ENCODE measurements at regions of chr6 and their contacts with region 1.

Region 1: DNA sequence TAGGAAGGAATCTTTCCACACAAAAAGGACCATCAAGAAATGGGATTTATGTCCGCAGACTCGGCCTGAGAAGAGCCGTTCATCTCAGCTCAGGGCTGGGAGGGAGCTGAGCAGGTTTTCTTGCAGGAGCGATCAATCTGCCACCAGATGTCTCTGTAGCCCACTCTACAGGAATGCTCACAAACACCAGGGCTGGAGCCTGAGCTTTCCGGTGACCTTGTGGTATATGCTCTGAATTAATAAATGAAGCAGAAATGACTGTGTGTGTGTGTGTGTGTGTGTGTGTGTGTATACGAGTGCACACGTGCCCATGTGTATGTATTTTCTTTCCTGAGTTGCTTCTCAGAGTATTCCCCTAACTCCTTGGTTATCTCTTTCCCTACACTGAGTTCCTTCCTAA is 12.0 kb downstream of the CD83 start:
- DNase-seq: peak in 9 of 10 donors; percentile 44 to 80 (median 63)
- H3K4me3 ChIP-seq: no peak overlapping the region
- H3K27ac ChIP-seq: peak overlapping the region in 18 of 59 donors; percentile 5 to 67 (median 36)
- H3K27me3 ChIP-seq: no peaks in the 10 kb centered on the region
- CTCF ChIP-seq: peak in 54 of 56 donors; percentile 31 to 80 (median 56)

Region 2: GRCh38 chr6:14476793-14477531 is 347.4 kb after region 1 on chr6:
- intact Hi-C with region 1: no loop called
- DNase-seq: peak in 5 of 10 donors; percentile 20 to 62 (median 41)
- H3K4me3 ChIP-seq: peak overlapping the region in 26 of 59 donors; percentile 1 to 46 (median 22)
- H3K27ac ChIP-seq: peak overlapping the region in 18 of 59 donors; percentile 1 to 70 (median 40)
- H3K27me3 ChIP-seq: no peaks in the 10 kb centered on the region
- CTCF ChIP-seq: no peak

Region 3: GRCh38 chr6:15512126-15512525 is 1382.6 kb after region 1 on chr6:
- intact Hi-C with region 1: loop called in 1 of 2 experiments (anchors 10 kb)
- DNase-seq: peak in 8 of 10 donors; percentile 50 to 78 (median 57)
- H3K4me3 ChIP-seq: no peak overlapping the region
- H3K27ac ChIP-seq: peak overlapping the region in 17 of 59 donors; percentile 5 to 77 (median 41)
- H3K27me3 ChIP-seq: no peaks in the 10 kb centered on the region
- CTCF ChIP-seq: peak in 51 of 56 donors; percentile 10 to 52 (median 38)

Measured in dorsolateral prefrontal cortex (tissue), 120 donors.